ENCODE measurements at regions of chr11 and their contacts with region 1.

Region 1: DNA sequence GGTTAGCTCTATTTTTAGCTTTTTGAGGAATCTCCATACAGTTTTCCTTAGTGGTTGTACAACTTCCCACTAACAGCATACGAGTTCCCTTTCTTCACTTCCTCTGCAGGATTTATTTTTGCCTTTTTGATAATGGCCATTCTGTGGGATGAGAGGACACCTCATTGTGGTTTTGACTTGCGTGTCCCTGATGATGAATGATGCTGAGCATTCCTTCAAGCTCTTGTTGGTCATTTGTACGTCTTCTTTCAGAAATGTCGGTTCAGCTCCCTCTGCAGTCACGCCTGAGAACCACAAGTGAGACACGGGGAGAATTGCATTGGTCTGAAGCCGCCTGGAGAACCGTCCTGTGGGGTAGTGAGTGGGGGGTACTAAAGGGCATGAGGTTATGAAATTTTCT is 2.0 kb upstream of the KRTAP5-10 start:
- DNase-seq: peak; percentile 45
- ATAC-seq: peak; percentile 80
- H3K4me3 Mint-ChIP-seq: no peak overlapping the region
- H3K27ac Mint-ChIP-seq: no peak overlapping the region
- H3K4me1 Mint-ChIP-seq: peaks cover 25% of the 10 kb centered on the region
- H3K27me3 Mint-ChIP-seq: peaks cover 16% of the 10 kb centered on the region
- CTCF ChIP-seq: no peak; the same call in 1 of the 2 replicates

Region 2: DNA sequence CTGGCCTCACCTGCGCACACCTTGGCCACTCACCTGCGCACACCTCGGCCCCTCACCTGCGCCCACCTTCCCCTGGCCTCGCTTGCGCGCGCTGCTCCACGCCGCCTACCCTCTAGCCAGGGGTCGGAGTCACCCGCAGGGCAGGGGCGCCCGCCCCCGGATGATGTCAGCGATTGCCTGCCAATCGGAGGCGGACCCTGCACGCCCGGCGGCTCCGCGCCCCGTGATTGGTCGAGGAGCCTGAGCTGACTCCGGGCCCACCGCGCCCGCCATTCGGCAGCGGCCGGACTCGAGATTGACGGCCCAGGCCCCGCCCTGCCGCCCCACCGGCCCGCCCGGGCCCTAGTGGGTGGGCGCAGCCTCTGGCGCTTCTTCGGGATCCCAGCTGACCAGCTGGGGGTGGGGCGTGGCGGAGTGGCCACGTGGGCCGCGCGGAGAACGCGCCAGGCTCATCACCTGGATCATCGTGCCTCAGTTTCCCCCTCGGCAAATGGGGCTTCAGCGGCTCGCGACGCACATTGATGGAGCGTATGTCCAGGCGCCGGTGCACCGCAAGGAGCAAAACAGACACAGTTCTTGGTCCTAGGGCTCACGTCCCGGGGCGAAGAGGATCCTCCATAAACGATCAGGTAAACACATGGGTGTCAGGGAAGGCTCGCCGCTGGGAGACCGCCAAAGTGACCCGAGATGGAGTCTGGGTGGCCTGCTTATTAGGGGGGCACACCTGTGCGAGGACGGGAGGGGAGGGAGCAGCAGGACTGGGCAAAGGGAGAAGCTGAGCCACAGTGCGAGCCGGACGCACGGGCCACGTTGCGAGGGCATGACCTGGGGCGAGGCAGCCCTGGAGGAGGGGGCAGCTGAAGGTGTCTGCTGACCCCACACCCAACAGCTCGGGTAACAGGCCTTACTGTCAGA is 114.9 kb before region 1 on chr11 and contains the start of gene DHCR7:
- CTCF ChIA-PET with region 1: interaction called, 25 read pairs
- POLR2A ChIA-PET with region 1: no interaction called
- DNase-seq: peak; percentile 98
- ATAC-seq: peak; percentile 78
- H3K4me3 Mint-ChIP-seq: peak within 1 kb of the TSS; percentile 90
- H3K27ac Mint-ChIP-seq: peak within 1 kb of the TSS; percentile 91
- H3K4me1 Mint-ChIP-seq: peaks cover 48% of the 10 kb centered on the region
- H3K27me3 Mint-ChIP-seq: no peaks in the 10 kb centered on the region
- CTCF ChIP-seq: no peak
- total RNA-seq, gene DHCR7: 104 to 120 TPM (median 120 TPM) in 3 replicates

Region 3: GRCh38 chr11:71504530-71504929 is 58.9 kb before region 1 on chr11:
- CTCF ChIA-PET with region 1: interaction called, 11 read pairs
- POLR2A ChIA-PET with region 1: no interaction called
- DNase-seq: no peak
- ATAC-seq: peak; percentile 58; the same call in 1 of the 2 replicates
- H3K4me3 Mint-ChIP-seq: no peak overlapping the region
- H3K27ac Mint-ChIP-seq: no peak overlapping the region
- H3K4me1 Mint-ChIP-seq: peaks cover 22% of the 10 kb centered on the region
- H3K27me3 Mint-ChIP-seq: peaks cover 4% of the 10 kb centered on the region
- CTCF ChIP-seq: no peak

Region 4: GRCh38 chr11:71580057-71581003 is 16.9 kb after region 1 on chr11:
- CTCF ChIA-PET with region 1: interaction called, 41 read pairs
- POLR2A ChIA-PET with region 1: no interaction called
- DNase-seq: peak; percentile 63
- ATAC-seq: peak; percentile 72
- H3K4me3 Mint-ChIP-seq: no peak overlapping the region
- H3K27ac Mint-ChIP-seq: no peak overlapping the region
- H3K4me1 Mint-ChIP-seq: peaks cover 32% of the 10 kb centered on the region
- H3K27me3 Mint-ChIP-seq: peaks cover 23% of the 10 kb centered on the region
- CTCF ChIP-seq: peak; percentile 57